Activated CD4-positive, alpha-beta memory T cell treated with anti-CD3 and anti-CD28 coated beads, Interleukin-2, amount 10 ng/mL, durations not matched to agents 7 days and 5 days (primary cell): ENCODE measurements at regions of chr7 and their contacts with region 1.

Region 1: GRCh38 chr7:129271500-129272355 is 46.9 kb downstream of the AHCYL2 start:
- DNase-seq: peak; percentile 65
- H3K4me3 Mint-ChIP-seq: no peak overlapping the region
- H3K27ac Mint-ChIP-seq: no peak overlapping the region
- H3K4me1 Mint-ChIP-seq: peaks cover 5% of the 10 kb centered on the region
- H3K27me3 Mint-ChIP-seq: no peaks in the 10 kb centered on the region

Region 2: GRCh38 chr7:129150199-129150996 is 121.3 kb before region 1 on chr7:
- CTCF ChIA-PET with region 1: no interaction called
- POLR2A ChIA-PET with region 1: no interaction called
- DNase-seq: no peak
- H3K4me3 Mint-ChIP-seq: no peak overlapping the region
- H3K27ac Mint-ChIP-seq: no peak overlapping the region
- H3K4me1 Mint-ChIP-seq: peaks cover 4% of the 10 kb centered on the region
- H3K27me3 Mint-ChIP-seq: peaks cover 40% of the 10 kb centered on the region

Region 3: GRCh38 chr7:129224251-129225205 is 47.2 kb before region 1 on chr7 and contains the start of gene AHCYL2:
- CTCF ChIA-PET with region 1: interaction called, 177 read pairs
- POLR2A ChIA-PET with region 1: interaction called, 5 read pairs
- DNase-seq: peak; percentile 98
- H3K4me3 Mint-ChIP-seq: peak within 1 kb of the TSS; percentile 87
- H3K27ac Mint-ChIP-seq: peak within 1 kb of the TSS; percentile 90
- H3K4me1 Mint-ChIP-seq: peaks cover 31% of the 10 kb centered on the region
- H3K27me3 Mint-ChIP-seq: no peaks in the 10 kb centered on the region
- total RNA-seq, gene AHCYL2: 18.5 to 21.0 TPM

Region 4: GRCh38 chr7:129258649-129259389 is 12.9 kb before region 1 on chr7:
- CTCF ChIA-PET with region 1: interaction called, 18 read pairs
- POLR2A ChIA-PET with region 1: no interaction called
- DNase-seq: no peak
- H3K4me3 Mint-ChIP-seq: no peak overlapping the region
- H3K27ac Mint-ChIP-seq: no peak overlapping the region
- H3K4me1 Mint-ChIP-seq: peaks cover 14% of the 10 kb centered on the region
- H3K27me3 Mint-ChIP-seq: no peaks in the 10 kb centered on the region

Region 5: DNA sequence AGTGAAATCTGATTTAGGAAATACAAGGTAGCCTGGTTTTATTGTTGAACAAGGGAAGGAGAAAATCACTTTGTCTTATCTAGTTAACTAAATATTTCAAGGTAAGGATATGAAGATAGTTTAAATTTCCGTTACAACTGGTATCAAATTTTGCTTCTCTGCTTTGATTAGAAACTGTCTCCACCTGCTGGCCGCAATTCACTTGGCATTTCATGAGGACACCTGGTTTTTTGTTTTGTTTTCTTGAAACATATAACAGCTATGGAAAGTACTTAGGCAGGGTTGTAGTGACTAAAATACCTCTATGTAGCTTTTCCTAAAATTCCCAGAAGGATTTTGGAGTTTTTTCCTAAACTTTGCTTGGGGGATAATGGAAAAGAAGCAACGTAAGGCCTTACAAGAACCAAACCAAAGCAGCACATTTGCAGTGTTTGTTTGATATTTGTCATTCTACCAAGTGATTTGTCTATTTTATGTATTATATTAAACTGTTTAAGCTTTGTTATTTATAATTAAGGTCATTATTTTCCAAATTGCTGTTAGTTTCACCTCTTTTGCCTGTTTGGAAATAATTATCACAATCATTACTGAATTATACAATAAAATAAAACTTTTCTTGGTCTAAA is 26.7 kb after region 1 on chr7:
- CTCF ChIA-PET with region 1: interaction called, 13 read pairs
- POLR2A ChIA-PET with region 1: no interaction called
- DNase-seq: peak; percentile 59
- H3K4me3 Mint-ChIP-seq: no peak overlapping the region
- H3K27ac Mint-ChIP-seq: no peak overlapping the region
- H3K4me1 Mint-ChIP-seq: no peaks in the 10 kb centered on the region
- H3K27me3 Mint-ChIP-seq: no peaks in the 10 kb centered on the region